Activated T-helper 1 cell treated with anti-CD3 and anti-CD28 coated beads, Interleukin-12 subunit alpha, Interleukin-12 subunit beta, Interleukin-2, Interleukin-4 antibody, amounts not matched to agents 30 ng/mL and 10 ng/mL and 1 ng/mL, durations not matched to agents 14 hours and 24 hours and 36 hours (primary cell): ENCODE measurements at regions of chr22 and their contacts with region 1.

Region 1: DNA sequence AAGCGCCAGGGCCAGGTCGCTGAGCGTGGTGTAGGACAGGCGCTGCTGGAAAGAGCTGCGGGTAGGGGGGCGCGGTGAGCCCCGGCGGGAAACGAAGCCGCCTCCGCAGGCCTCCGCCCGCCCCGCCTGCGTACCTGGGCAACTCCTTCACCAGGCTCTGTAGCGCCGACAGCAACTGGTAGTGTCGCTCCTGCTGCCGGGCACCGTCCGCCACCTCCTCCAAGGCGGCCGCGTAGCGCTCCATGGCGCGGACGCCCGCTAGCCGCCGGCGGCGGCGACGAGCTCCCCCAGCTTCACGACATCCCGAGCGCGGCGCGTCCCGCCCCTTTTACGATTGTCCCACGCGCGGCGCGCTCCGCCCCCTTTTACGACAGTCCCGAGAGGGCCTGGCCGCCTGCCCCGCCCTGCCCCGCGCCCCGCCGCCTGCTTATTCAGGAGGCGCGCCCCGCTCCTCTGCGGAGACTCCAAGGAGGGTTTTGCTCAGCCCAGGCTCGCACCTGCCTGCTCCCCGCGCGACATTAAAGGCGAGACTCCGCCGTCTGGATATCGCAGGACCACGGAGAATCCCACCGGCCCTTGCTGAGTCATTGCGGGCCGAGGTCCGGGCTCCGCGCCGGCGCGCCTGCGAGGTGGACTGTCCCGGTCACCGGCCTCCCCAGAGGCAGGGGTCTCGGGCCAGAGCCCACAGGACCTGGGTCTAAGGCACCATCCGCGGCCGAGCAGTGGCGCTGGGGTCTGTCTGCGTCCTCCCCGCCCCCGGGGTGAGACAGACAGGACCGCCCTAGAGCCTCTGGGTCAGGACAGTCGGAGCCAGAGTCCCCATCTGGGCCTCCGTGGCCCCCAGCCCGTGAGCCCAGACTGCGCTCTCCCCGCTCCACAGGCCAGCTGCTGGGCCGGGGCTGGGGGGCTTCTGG is at the start of gene DGCR6L:
- DNase-seq: peak; percentile 97
- H3K4me3 Mint-ChIP-seq: peak within 1 kb of the TSS; percentile 92
- H3K27ac Mint-ChIP-seq: peak within 1 kb of the TSS; percentile 86
- H3K4me1 Mint-ChIP-seq: peaks cover 62% of the 10 kb centered on the region
- H3K27me3 Mint-ChIP-seq: no peaks in the 10 kb centered on the region
- total RNA-seq, gene DGCR6L: 35.5 and 40.6 TPM in 2 replicates

Region 2: DNA sequence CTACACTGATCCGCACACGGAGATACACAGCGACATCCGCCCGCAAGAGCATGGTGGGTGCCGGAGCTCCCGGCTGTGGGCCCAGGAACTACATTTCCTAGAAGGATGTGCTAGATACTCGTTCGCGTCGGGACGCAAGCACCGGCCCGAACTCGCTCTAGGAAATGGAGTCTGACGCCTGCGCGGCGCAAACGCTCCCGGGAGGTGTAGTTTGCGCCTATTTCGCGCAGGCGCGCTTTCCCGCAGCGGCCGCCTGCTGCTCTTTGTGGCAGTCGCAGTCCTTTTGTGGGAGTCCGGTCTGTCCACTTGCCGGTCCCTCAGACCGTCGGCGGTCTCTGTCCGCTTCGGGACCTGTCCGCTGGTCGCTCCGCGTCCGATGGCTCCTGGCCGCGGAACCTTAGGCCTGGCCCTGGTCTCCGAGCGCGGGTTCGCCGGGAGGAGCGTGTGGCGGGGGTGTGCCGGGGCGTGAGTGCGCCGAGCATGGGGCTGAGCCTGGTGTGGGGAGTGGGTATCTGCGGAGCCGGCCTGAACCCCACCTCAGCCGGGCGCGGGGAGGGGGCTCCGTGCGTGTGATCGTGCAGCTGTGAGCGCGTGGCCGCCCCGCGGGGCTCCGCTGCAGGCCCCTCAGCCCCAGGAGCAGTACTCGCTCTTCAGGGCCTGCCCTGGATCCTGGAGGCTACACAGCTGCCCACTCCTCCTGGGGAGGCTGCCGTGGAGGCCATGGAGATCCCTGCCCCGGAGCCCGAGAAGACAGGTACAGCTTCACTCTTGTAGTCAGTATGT is 74.1 kb after region 1 on chr22 and contains the start of gene ZNF74:
- intact Hi-C with region 1: loop called (anchors 1 kb)
- DNase-seq: peak; percentile 79
- H3K4me3 Mint-ChIP-seq: peak within 1 kb of the TSS; percentile 89
- H3K27ac Mint-ChIP-seq: peak within 1 kb of the TSS; percentile 91
- H3K4me1 Mint-ChIP-seq: peaks cover 22% of the 10 kb centered on the region
- H3K27me3 Mint-ChIP-seq: no peaks in the 10 kb centered on the region
- total RNA-seq, gene ZNF74: 14.3 and 15.2 TPM in 2 replicates